GM13976 (cell line): ENCODE measurements at regions of chr11 and their contacts with region 1.

Region 1: GRCh38 chr11:19546325-19546724 is 166.3 kb upstream of the NAV2 start:
- DNase-seq: no peak
- CTCF ChIP-seq: no peak

Region 2: GRCh38 chr11:19311308-19312030 is 234.9 kb before region 1 on chr11:
- in situ Hi-C with region 1: loop called (anchors 10 kb)
- DNase-seq: peak; percentile 67
- CTCF ChIP-seq: peak; percentile 68

Region 3: DNA sequence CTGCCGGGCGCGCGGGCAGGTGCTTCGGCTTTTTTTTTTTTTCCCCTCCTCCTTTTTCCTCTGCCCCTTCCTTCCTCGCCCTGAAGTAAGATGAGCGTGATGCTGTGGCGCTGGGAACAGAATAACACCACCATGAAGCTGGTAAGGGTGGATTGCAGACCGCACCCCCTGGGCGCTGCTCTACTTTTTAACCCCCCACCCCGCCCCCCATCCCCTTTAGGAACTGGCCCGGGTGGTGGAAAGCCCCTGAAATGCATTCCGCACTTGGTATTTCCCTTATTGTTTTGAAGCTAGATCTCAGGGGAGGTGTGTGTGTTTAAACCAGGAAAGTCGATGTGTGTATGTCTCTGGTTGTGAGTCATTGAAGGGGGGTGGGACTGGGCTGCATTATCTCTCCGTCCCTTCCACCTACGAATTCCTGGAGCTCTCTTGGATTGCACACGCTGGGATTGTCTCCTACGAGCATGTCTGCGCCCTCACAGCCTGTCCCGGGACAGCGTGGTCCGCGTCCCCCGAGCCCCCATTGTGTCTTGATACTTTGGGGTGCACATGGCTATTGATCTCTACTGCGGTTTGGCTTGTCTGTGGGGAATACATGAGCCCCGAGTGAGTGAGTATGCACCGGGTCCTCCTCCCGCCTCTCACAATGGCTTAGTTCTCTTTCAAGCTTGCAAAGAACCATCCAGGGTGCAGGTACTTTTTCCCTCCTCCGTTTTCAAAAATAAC is 231.2 kb after region 1 on chr11:
- in situ Hi-C with region 1: no loop called
- DNase-seq: peak; percentile 82
- CTCF ChIP-seq: no peak